Body of pancreas (tissue), 4 donors: ENCODE measurements at regions of chr3 and their contacts with region 1.

Region 1: DNA sequence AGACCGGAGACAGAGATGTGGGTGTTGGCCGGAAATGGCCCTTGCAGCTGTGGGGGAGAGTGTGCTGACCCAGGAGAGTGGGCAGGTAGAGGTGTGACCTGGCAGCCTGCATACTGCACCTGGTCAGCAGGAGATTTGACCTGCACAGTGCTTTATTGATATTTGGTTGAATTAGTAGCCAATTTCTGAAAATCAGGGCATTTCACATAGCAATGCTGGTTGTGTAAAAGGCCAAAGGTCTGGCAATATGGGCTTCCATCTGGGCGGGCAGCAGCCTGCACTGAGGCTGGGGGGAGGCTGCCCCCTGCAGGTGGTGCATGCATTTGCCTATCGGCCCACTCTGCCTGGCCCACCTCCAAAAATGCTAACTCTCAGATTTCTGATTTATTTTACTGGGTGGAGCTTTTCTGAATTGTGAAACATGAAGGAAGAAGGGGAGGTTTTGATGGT is 9.4 kb upstream of the MGLL start:
- DNase-seq: peak; percentile 50 to 78 (median 62)
- ATAC-seq: no peak
- H3K4me3 ChIP-seq: no peak overlapping the region
- H3K27ac ChIP-seq: no peak overlapping the region
- H3K4me1 ChIP-seq: no peaks in the 10 kb centered on the region
- H3K27me3 ChIP-seq: no peaks in the 10 kb centered on the region
- CTCF ChIP-seq: peak; percentile 35 to 92 (median 65)
- POLR2A ChIP-seq: no peak

Region 2: DNA sequence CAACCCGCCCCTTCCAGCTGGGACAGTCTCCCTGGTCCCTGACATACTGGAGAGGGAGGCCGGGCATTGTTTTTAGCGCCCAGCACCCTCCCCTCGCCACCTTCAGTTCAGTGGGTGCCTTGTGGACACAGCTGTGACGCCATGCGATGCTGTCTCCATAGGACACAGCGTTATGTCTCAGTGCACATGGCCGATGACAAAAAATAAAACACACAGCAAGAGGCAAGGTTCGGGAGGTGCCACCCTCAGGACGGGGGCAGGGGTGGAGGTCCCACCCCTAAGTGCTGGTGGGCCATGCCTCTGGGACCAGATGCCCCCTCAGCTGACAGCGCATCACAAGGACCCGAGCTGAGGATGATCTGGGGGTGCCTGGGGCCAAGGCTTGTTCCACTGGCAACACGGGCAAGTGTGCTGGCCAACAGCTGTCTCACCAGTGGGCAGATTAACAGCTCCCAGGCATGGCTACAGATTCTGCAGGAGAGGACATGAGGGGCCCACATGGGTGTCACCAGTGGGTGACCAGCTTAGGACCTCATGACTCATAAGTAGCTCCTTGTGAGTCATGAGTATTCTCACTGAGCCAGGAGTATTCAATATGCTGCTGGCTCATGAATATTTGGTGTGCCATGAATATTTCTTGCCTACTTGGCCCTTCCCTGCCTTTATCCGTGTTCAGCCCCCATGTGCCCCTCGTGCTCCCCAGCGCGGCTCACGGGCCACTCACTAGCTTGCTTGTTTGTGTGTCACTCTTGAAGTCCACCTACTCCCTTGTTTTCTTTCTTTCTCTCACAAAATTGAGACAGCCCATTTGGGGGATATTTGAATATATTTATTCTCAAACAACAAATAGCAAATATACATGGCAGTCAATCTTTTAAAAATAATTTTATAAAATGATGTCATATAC is 767.0 kb before region 1 on chr3:
- intact Hi-C with region 1: no loop called
- DNase-seq: peak in 1 of 4 donors; percentile 6
- ATAC-seq: no peak
- H3K4me3 ChIP-seq: no peak overlapping the region
- H3K27ac ChIP-seq: no peak overlapping the region
- H3K4me1 ChIP-seq: no peaks in the 10 kb centered on the region
- H3K27me3 ChIP-seq: no peaks in the 10 kb centered on the region
- CTCF ChIP-seq: no peak
- POLR2A ChIP-seq: no peak

Region 3: GRCh38 chr3:127574880-127575878 is 256.6 kb before region 1 on chr3:
- intact Hi-C with region 1: loop called (anchors 10 kb)
- DNase-seq: peak; percentile 83 to 91 (median 88)
- ATAC-seq: peak; percentile 88
- H3K4me3 ChIP-seq: no peak overlapping the region
- H3K27ac ChIP-seq: no peak overlapping the region
- H3K4me1 ChIP-seq: peaks cover 5% of the 10 kb centered on the region
- H3K27me3 ChIP-seq: no peaks in the 10 kb centered on the region
- CTCF ChIP-seq: peak; percentile 94 to 99 (median 96)
- POLR2A ChIP-seq: no peak

Region 4: GRCh38 chr3:127646501-127647046 is 185.2 kb before region 1 on chr3:
- intact Hi-C with region 1: loop called (anchors 5 kb)
- DNase-seq: no peak
- ATAC-seq: no peak
- H3K4me3 ChIP-seq: no peak overlapping the region
- H3K27ac ChIP-seq: no peak overlapping the region
- H3K4me1 ChIP-seq: no peaks in the 10 kb centered on the region
- H3K27me3 ChIP-seq: no peaks in the 10 kb centered on the region
- CTCF ChIP-seq: no peak
- POLR2A ChIP-seq: no peak

Region 5: GRCh38 chr3:127949446-127950055 is 117.8 kb after region 1 on chr3:
- intact Hi-C with region 1: no loop called
- DNase-seq: no peak
- ATAC-seq: no peak
- H3K4me3 ChIP-seq: no peak overlapping the region
- H3K27ac ChIP-seq: no peak overlapping the region
- H3K4me1 ChIP-seq: no peaks in the 10 kb centered on the region
- H3K27me3 ChIP-seq: no peaks in the 10 kb centered on the region
- CTCF ChIP-seq: no peak
- POLR2A ChIP-seq: no peak

Region 6: GRCh38 chr3:128051837-128052594 is 220.3 kb after region 1 on chr3 and contains the start of gene SEC61A1:
- intact Hi-C with region 1: no loop called
- DNase-seq: peak; percentile 95
- ATAC-seq: peak; percentile 96
- H3K4me3 ChIP-seq: peak within 1 kb of the TSS; percentile 96 to 98
- H3K27ac ChIP-seq: peak within 1 kb of the TSS; percentile 88 to 99 (median 97)
- H3K4me1 ChIP-seq: peaks cover 44% of the 10 kb centered on the region
- H3K27me3 ChIP-seq: no peaks in the 10 kb centered on the region
- CTCF ChIP-seq: peak in 1 of 7 experiments; percentile 25
- POLR2A ChIP-seq: peak; percentile 93 to 94 (median 94)
- total RNA-seq, gene SEC61A1: 168 to 207 TPM